IMR-90 (cell line): ENCODE measurements at regions of chr2 and their contacts with region 1.

Region 1: GRCh38 chr2:166180951-166181812 is 53.4 kb upstream of the SCN1A start:
- DNase-seq: peak; percentile 56
- ATAC-seq: peak; percentile 88
- H3K4me3 ChIP-seq: no peak overlapping the region
- H3K27ac ChIP-seq: no peak overlapping the region
- H3K4me1 ChIP-seq: no peaks in the 10 kb centered on the region
- H3K27me3 ChIP-seq: no peaks in the 10 kb centered on the region
- CTCF ChIP-seq: peak; percentile 66
- POLR2A ChIP-seq: no peak
- RAD21 ChIP-seq: peak; percentile 58

Region 2: DNA sequence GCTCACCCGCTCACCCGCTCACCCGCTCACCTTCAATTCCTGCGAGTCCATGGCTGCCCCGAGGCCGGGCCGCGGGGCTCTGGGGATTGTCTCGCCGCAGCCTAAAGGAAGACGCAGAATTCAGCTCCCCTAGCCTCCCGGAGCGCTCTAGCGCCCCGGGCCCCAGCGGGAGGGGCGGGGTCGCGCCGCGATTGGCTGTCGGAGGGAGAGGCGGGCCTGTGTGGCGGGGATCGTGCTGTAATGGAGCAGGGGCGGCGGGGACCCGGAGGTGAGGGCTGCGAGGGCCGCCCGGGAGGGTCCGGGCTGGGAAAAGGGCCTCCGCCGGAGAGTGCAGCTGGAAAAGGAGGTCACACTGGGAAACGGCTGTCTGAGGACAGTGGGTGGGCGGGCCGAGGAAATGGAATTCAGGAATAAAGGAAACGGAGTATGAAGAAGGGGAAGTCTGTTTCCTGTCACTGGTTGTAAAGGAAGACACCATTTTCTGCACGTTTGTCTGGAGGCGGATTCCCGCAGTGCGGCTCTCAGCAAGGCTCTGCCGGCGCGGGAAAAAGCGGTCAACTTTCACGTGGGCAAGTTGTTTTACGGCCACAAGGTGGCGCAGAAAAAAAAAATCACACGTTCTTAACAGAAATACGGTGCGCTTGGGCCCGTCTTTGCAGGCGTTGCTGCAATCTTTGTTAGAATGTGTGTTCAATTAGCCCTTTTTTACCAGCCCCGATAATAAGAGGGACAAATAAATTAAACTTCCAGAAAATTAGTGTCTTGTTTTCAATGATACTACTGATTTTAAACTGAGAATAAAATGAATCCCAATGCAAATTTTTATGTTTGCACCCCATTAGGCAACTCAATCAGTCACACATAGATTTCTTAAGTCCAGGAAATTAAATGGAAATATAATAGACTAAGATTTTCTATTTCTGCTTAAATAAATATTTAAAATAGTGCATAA is 227.3 kb before region 1 on chr2 and contains the start of gene TTC21B:
- CTCF ChIA-PET with region 1: no interaction called
- POLR2A ChIA-PET with region 1: no interaction called
- dilution Hi-C with region 1: no loop called
- in situ Hi-C with region 1: no loop called
- intact Hi-C with region 1: loop called (anchors 2 kb)
- DNase-seq: peak; percentile 95
- ATAC-seq: peak; percentile 99
- H3K4me3 ChIP-seq: peak within 1 kb of the TSS; percentile 64
- H3K27ac ChIP-seq: peak within 1 kb of the TSS; percentile 45
- H3K4me1 ChIP-seq: no peaks in the 10 kb centered on the region
- H3K27me3 ChIP-seq: no peaks in the 10 kb centered on the region
- CTCF ChIP-seq: peak; percentile 84
- POLR2A ChIP-seq: peak; percentile 81
- RAD21 ChIP-seq: peak; percentile 54
- total RNA-seq, gene TTC21B: 17.2 and 23.1 TPM in 2 replicates

Region 3: GRCh38 chr2:166057370-166058164 is 123.6 kb before region 1 on chr2:
- CTCF ChIA-PET with region 1: no interaction called
- POLR2A ChIA-PET with region 1: no interaction called
- dilution Hi-C with region 1: no loop called
- in situ Hi-C with region 1: no loop called
- intact Hi-C with region 1: loop called (anchors 1 kb)
- DNase-seq: peak; percentile 45
- ATAC-seq: peak; percentile 44; the same call in 1 of the 2 replicates
- H3K4me3 ChIP-seq: no peak overlapping the region
- H3K27ac ChIP-seq: no peak overlapping the region
- H3K4me1 ChIP-seq: no peaks in the 10 kb centered on the region
- H3K27me3 ChIP-seq: no peaks in the 10 kb centered on the region
- CTCF ChIP-seq: peak; percentile 66
- POLR2A ChIP-seq: no peak
- RAD21 ChIP-seq: peak; percentile 68

Region 4: GRCh38 chr2:166384774-166385173 is 203.6 kb after region 1 on chr2:
- CTCF ChIA-PET with region 1: interaction called, 6 read pairs
- POLR2A ChIA-PET with region 1: no interaction called
- dilution Hi-C with region 1: no loop called
- in situ Hi-C with region 1: loop called (anchors 10 kb)
- intact Hi-C with region 1: loop called (anchors 1 kb)
- DNase-seq: peak; percentile 52
- ATAC-seq: no peak
- H3K4me3 ChIP-seq: no peak overlapping the region
- H3K27ac ChIP-seq: no peak overlapping the region
- H3K4me1 ChIP-seq: no peaks in the 10 kb centered on the region
- H3K27me3 ChIP-seq: no peaks in the 10 kb centered on the region
- CTCF ChIP-seq: peak; percentile 52
- POLR2A ChIP-seq: no peak
- RAD21 ChIP-seq: peak; percentile 43

Region 5: DNA sequence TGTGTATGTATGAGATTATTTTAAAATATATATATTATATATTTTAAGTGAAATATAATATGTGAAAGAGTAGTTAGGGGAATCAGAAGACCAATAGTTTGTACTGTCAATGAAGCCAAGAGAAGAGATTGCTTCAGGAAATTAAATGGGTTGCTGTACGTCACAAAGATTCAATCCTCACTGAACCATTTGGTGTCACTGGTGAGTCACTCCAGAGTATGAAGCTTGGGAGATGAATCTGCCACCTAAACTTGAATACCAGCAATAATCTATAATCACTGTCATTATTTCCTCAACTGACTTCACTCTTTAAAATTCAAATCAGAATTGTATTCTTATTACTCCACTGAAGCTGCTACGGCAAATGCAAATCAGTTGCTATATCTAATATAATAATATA is 236.5 kb after region 1 on chr2:
- CTCF ChIA-PET with region 1: interaction called, 7 read pairs
- POLR2A ChIA-PET with region 1: no interaction called
- dilution Hi-C with region 1: no loop called
- in situ Hi-C with region 1: no loop called
- intact Hi-C with region 1: loop called (anchors 1 kb)
- DNase-seq: peak; percentile 65
- ATAC-seq: no peak; the same call in 1 of the 2 replicates
- H3K4me3 ChIP-seq: no peak overlapping the region
- H3K27ac ChIP-seq: no peak overlapping the region
- H3K4me1 ChIP-seq: no peaks in the 10 kb centered on the region
- H3K27me3 ChIP-seq: no peaks in the 10 kb centered on the region
- CTCF ChIP-seq: no peak; the same call in 1 of the 2 replicates
- POLR2A ChIP-seq: no peak
- RAD21 ChIP-seq: 0 out of 2 replicates have a peak, but pooled peaks have one; percentile 4

Region 6: GRCh38 chr2:166516712-166517303 is 335.6 kb after region 1 on chr2:
- CTCF ChIA-PET with region 1: interaction called, 5 read pairs
- POLR2A ChIA-PET with region 1: no interaction called
- dilution Hi-C with region 1: no loop called
- in situ Hi-C with region 1: loop called (anchors 5 kb)
- intact Hi-C with region 1: loop called (anchors 1 kb)
- DNase-seq: peak; percentile 40
- ATAC-seq: peak; percentile 60; the same call in 1 of the 2 replicates
- H3K4me3 ChIP-seq: no peak overlapping the region
- H3K27ac ChIP-seq: no peak overlapping the region
- H3K4me1 ChIP-seq: peaks cover 5% of the 10 kb centered on the region
- H3K27me3 ChIP-seq: no peaks in the 10 kb centered on the region
- CTCF ChIP-seq: peak; percentile 60
- POLR2A ChIP-seq: no peak
- RAD21 ChIP-seq: peak; percentile 55